ENCODE measurements at regions of chr6 and their contacts with region 1.

Region 1: GRCh38 chr6:126339796-126340609 is at the start of gene CENPW:
- DNase-seq: peak; percentile 88
- ATAC-seq: peak; percentile 83
- H3K4me3 ChIP-seq: peak within 1 kb of the TSS; percentile 99
- H3K27ac ChIP-seq: peak within 1 kb of the TSS; percentile 59
- H3K4me1 ChIP-seq: peaks cover 12% of the 10 kb centered on the region
- H3K27me3 ChIP-seq: no peaks in the 10 kb centered on the region
- CTCF ChIP-seq: no peak
- total RNA-seq, gene CENPW: 28.9 and 33.6 TPM in 2 replicates

Region 2: DNA sequence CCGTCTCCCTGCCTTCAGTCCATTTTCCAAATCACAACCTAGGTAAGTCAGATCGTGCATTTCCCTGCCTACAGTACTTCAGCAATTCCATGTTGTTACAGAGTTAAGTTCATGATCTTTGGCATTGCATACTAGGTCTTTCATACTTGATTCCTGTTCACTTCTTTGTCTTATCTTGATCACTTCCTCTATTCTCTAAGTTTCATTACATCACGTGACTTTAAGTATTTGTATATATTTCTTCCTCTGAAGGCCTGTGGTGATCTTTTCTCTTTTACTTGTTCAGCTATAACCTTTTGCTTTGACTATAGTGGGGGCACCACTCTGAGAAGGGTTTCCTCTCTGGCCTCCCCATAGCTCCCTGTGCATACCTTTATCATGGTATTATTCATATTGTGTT is 253.4 kb before region 1 on chr6:
- CTCF ChIA-PET with region 1: no interaction called
- POLR2A ChIA-PET with region 1: no interaction called
- intact Hi-C with region 1: no loop called
- DNase-seq: no peak
- ATAC-seq: no peak
- H3K4me3 ChIP-seq: no peak overlapping the region
- H3K27ac ChIP-seq: no peak overlapping the region
- H3K4me1 ChIP-seq: no peaks in the 10 kb centered on the region
- H3K27me3 ChIP-seq: no peaks in the 10 kb centered on the region
- CTCF ChIP-seq: no peak

Region 3: GRCh38 chr6:126107475-126108166 is 232.4 kb before region 1 on chr6:
- CTCF ChIA-PET with region 1: no interaction called
- POLR2A ChIA-PET with region 1: no interaction called
- intact Hi-C with region 1: no loop called
- DNase-seq: no peak
- ATAC-seq: no peak
- H3K4me3 ChIP-seq: no peak overlapping the region
- H3K27ac ChIP-seq: no peak overlapping the region
- H3K4me1 ChIP-seq: peaks cover 12% of the 10 kb centered on the region
- H3K27me3 ChIP-seq: no peaks in the 10 kb centered on the region
- CTCF ChIP-seq: no peak

Region 4: GRCh38 chr6:126388104-126388598 is 48.1 kb after region 1 on chr6:
- CTCF ChIA-PET with region 1: no interaction called
- POLR2A ChIA-PET with region 1: no interaction called
- intact Hi-C with region 1: no loop called
- DNase-seq: no peak
- ATAC-seq: no peak
- H3K4me3 ChIP-seq: no peak overlapping the region
- H3K27ac ChIP-seq: no peak overlapping the region
- H3K4me1 ChIP-seq: no peaks in the 10 kb centered on the region
- H3K27me3 ChIP-seq: no peaks in the 10 kb centered on the region
- CTCF ChIP-seq: no peak

Region 5: DNA sequence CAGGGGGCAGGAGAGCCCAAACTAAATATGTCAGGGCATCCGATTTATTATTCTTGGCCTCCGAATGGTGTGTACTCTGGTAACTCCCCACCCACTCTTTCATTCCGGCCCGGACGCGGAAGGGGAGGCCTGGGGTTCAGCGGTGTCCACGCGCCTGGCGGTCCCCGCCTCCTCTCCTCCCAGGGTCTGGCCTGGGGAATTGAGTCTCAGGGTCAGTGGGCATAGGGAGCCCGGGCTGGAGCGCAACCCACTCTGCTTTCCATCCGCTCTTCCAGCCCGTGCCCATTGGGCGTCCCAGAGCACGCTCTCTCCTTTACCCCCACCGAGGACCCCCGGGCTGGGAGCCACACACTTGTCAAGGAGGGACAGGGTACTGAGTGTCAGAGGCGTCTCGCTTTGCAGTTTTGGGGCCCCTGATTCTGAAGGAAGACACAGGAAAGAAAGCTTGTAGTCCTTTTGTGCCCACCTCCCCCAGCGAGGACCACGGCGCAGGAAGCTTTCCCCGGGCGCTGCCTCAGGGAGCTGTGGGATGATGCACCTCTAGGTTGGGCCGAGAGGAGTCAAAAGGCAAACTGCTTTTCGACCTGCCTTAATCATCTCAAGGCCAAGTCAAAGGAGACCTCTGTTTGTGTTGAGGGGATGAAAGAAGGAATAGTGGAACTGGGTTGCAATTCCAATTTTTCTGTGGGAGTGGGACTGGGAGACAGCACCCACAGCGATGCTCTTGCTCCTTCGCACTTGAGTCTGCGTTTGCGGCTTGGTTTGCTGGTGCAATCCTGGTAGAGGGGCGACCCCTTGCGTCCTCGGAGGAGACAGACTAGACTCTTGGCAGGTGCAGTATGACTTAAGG is 781.0 kb after region 1 on chr6:
- CTCF ChIA-PET with region 1: no interaction called
- POLR2A ChIA-PET with region 1: no interaction called
- intact Hi-C with region 1: loop called (anchors 10 kb)
- DNase-seq: peak; percentile 64
- ATAC-seq: peak; percentile 72
- H3K4me3 ChIP-seq: no peak overlapping the region
- H3K27ac ChIP-seq: no peak overlapping the region
- H3K4me1 ChIP-seq: no peaks in the 10 kb centered on the region; the same call in 1 of the 2 replicates
- H3K27me3 ChIP-seq: peaks cover 56% of the 10 kb centered on the region
- CTCF ChIP-seq: peak; percentile 83